Heart right ventricle (tissue), 16 donors: ENCODE measurements at regions of chr6 and their contacts with region 1.

Region 1: GRCh38 chr6:37566111-37566949 is 66.6 kb upstream of the CCDC167 start:
- DNase-seq: peak; percentile 37 to 66
- ATAC-seq: peak; percentile 82 to 91 (median 86)
- H3K4me3 ChIP-seq: peak overlapping the region in 9 of 10 donors; percentile 21 to 54 (median 44)
- H3K27ac ChIP-seq: no peak overlapping the region
- H3K4me1 ChIP-seq: peaks cover 3 to 33% (median 13%) of the 10 kb centered on the region in 9 donors
- H3K27me3 ChIP-seq: peaks cover 0 to 35% (median 21%) of the 10 kb centered on the region in 7 donors
- CTCF ChIP-seq: peak; percentile 64 to 97 (median 83)

Region 2: GRCh38 chr6:37324131-37325033 is 241.9 kb before region 1 on chr6:
- intact Hi-C with region 1: loop called in 3 of 10 experiments (anchors 5 to 10 kb)
- DNase-seq: no peak
- ATAC-seq: no peak
- H3K4me3 ChIP-seq: no peak overlapping the region
- H3K27ac ChIP-seq: peak overlapping the region in 1 of 10 donors; percentile 15
- H3K4me1 ChIP-seq: peaks cover 0 to 44% (median 12%) of the 10 kb centered on the region in 9 donors
- H3K27me3 ChIP-seq: no peaks in the 10 kb centered on the region
- CTCF ChIP-seq: no peak

Region 3: GRCh38 chr6:37381579-37381978 is 184.8 kb before region 1 on chr6:
- intact Hi-C with region 1: loop called in 8 of 10 experiments (anchors 5 to 10 kb)
- DNase-seq: no peak
- ATAC-seq: peak in 4 of 8 donors; percentile 56 to 71 (median 61)
- H3K4me3 ChIP-seq: no peak overlapping the region
- H3K27ac ChIP-seq: no peak overlapping the region
- H3K4me1 ChIP-seq: no peaks in the 10 kb centered on the region
- H3K27me3 ChIP-seq: no peaks in the 10 kb centered on the region
- CTCF ChIP-seq: peak; percentile 30 to 69 (median 54)

Region 4: GRCh38 chr6:37489660-37490361 is 76.5 kb before region 1 on chr6:
- intact Hi-C with region 1: loop called in 5 of 10 experiments (anchors 2 to 5 kb)
- DNase-seq: peak in 1 of 2 donors; percentile 39
- ATAC-seq: peak in 7 of 8 donors; percentile 37 to 63 (median 61)
- H3K4me3 ChIP-seq: no peak overlapping the region
- H3K27ac ChIP-seq: peak overlapping the region in 2 of 10 donors; percentile 18 to 55
- H3K4me1 ChIP-seq: peaks cover 3 to 44% (median 29%) of the 10 kb centered on the region in 9 donors
- H3K27me3 ChIP-seq: no peaks in the 10 kb centered on the region
- CTCF ChIP-seq: peak in 4 of 9 donors; percentile 22 to 34 (median 30)

Region 5: GRCh38 chr6:37679539-37680476 is 113.5 kb after region 1 on chr6:
- intact Hi-C with region 1: loop called in 3 of 10 experiments (anchors 5 to 10 kb)
- DNase-seq: no peak
- ATAC-seq: peak in 1 of 8 donors; percentile 11
- H3K4me3 ChIP-seq: no peak overlapping the region
- H3K27ac ChIP-seq: no peak overlapping the region
- H3K4me1 ChIP-seq: no peaks in the 10 kb centered on the region
- H3K27me3 ChIP-seq: no peaks in the 10 kb centered on the region
- CTCF ChIP-seq: no peak

Region 6: DNA sequence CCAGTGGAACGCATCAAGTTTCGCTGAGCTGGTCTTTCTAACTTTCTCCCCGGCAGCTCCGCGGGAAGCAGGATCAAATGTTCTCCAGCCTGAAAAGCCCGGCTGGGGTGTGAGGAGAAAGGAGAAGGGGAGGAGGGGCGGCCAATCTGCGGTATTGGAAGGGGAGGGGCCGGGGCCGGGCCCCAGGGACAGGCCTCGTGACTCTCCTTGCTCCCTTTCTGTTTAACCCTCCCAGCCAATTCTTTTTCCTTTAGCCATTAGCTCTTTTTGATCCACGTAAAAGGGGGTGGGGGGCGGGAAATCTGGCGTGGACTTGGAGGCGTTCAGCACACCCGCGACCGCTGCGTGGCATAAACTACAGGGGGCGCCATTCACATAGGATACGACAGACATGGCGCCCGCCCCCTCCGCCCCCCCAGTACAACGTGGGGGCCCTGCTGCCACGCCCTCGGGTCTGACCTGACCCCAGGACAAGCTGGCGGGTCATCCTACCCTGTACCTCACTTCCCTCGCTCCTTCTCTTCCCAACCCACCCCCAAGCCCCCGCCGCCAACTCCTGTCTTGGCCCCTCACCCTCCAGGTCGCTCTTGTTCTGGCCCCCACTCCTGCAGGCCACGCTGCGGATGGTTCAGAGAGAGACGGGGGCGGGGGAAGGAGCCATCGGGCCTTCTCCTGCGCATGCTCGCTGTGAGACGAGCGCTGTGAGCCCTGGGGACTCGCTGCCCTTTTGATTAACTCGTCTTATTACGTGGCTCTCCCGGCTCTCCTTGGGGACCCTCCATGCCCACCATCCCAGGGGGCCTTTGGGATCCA is 139.1 kb after region 1 on chr6:
- intact Hi-C with region 1: no loop called
- DNase-seq: peak; percentile 81 to 86
- ATAC-seq: peak; percentile 89 to 96 (median 93)
- H3K4me3 ChIP-seq: peak overlapping the region; percentile 27 to 61 (median 56)
- H3K27ac ChIP-seq: peak overlapping the region; percentile 37 to 82 (median 72)
- H3K4me1 ChIP-seq: peaks cover 0 to 19% (median 6%) of the 10 kb centered on the region in 9 donors
- H3K27me3 ChIP-seq: peaks cover 0 to 48% (median 0%) of the 10 kb centered on the region in 7 donors
- CTCF ChIP-seq: peak; percentile 38 to 82 (median 72)